Mammary epithelial cell (primary cell): ENCODE measurements at regions of chr1 and their contacts with region 1.

Region 1: DNA sequence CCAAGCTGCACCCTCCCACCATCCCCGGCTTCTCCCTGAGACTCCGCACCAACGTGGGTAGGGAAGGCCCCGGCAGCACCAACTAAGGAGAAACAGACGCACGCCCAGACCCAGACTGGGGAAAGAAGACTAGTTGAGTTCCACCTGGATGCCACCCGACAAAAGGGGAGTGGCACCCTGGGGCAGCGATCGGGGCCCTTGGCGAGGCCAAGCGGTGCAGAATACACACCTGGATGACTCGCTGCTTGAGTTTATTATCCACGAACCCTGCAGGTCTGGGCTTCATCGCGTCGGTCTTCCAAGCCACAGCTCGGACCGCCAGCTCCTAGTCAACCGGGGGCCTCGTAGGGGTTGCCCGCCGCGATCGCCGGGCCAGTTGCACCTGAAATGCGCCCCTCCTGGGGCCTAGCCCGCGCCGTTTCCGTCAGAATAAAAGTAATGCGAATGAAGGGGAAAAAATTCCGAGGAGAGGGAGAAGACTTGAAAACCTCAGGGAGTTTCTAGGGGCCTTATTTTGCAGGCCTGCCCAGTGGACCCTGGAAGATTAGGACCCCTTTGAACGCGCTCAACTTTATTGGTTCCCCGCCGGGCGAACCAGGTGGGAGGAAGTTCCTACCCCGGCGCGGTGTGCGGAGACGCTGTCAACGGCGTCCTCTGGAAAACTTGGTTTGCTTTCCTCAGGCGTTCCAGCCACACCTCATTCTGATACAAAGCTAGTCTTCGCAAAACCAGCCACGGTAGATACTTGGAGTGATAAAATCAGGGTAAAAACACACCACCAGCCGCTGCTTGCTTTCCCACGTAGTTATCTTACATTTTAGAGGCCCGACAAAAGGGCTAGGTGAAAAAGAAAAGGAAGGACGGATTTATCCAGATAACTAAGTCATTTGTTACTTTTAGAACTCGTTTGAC is at the start of gene NVL:
- DNase-seq: peak; percentile 89
- H3K4me3 ChIP-seq: peak within 1 kb of the TSS; percentile 64 to 98 (median 87)
- H3K27ac ChIP-seq: peak within 1 kb of the TSS; percentile 95
- H3K4me1 ChIP-seq: peaks cover 14% of the 10 kb centered on the region
- H3K27me3 ChIP-seq: no peaks in the 10 kb centered on the region
- CTCF ChIP-seq: no peak
- total RNA-seq, gene NVL: 24.3 to 28.8 TPM

Region 2: GRCh38 chr1:224113918-224114786 is 215.9 kb before region 1 on chr1 and contains the start of gene FBXO28:
- CTCF ChIA-PET with region 1: no interaction called
- dilution Hi-C with region 1: no loop called
- in situ Hi-C with region 1: loop called (anchors 10 kb)
- intact Hi-C with region 1: loop called (anchors 1 kb)
- DNase-seq: peak; percentile 88
- H3K4me3 ChIP-seq: peak within 1 kb of the TSS; percentile 58 to 85 (median 75)
- H3K27ac ChIP-seq: peak within 1 kb of the TSS; percentile 72
- H3K4me1 ChIP-seq: peaks cover 16% of the 10 kb centered on the region
- H3K27me3 ChIP-seq: no peaks in the 10 kb centered on the region
- CTCF ChIP-seq: no peak
- total RNA-seq, gene FBXO28: 41.0 to 49.4 TPM

Region 3: DNA sequence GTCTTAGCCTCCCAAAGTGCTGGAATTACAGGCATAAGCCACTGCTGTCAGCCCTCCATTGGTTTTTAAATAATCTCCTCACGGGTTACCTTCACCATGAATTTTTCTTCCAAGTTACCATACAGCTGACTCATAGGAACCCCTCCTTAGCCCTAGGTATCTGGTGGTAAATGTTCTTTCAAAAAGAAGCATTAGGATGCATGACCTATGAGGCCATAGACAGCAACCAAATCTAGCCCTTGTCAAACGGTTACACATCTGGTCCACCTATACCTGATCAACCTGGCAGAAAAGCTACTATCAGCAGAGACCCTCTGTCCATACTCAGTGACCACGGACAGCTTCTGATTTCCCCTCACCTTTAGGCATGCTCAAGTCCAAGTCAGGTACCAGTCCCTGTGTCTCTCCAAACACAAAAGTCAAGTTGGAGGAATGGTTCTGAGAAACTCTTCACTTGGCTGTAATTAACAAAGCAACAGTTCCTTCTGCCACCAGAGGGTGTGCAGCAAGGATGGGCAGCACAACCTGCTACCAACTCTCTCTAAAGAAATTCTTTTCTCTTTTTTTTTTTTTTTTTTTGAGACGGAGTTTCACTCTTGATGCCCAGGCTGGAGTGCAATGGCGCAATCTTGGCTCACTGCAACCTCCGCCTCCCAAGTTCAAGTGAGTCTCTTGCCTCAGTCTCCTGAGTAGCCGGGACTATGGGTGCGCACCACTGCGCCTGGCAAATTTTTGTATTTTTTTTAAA is 159.6 kb before region 1 on chr1:
- CTCF ChIA-PET with region 1: no interaction called
- dilution Hi-C with region 1: no loop called
- in situ Hi-C with region 1: no loop called
- intact Hi-C with region 1: loop called (anchors 1 kb)
- DNase-seq: peak; percentile 28
- H3K4me3 ChIP-seq: no peak overlapping the region
- H3K27ac ChIP-seq: no peak overlapping the region
- H3K4me1 ChIP-seq: no peaks in the 10 kb centered on the region
- H3K27me3 ChIP-seq: no peaks in the 10 kb centered on the region
- CTCF ChIP-seq: peak; percentile 33 to 68